ENCODE measurements at regions of chr1 and their contacts with region 1.

Region 1: DNA sequence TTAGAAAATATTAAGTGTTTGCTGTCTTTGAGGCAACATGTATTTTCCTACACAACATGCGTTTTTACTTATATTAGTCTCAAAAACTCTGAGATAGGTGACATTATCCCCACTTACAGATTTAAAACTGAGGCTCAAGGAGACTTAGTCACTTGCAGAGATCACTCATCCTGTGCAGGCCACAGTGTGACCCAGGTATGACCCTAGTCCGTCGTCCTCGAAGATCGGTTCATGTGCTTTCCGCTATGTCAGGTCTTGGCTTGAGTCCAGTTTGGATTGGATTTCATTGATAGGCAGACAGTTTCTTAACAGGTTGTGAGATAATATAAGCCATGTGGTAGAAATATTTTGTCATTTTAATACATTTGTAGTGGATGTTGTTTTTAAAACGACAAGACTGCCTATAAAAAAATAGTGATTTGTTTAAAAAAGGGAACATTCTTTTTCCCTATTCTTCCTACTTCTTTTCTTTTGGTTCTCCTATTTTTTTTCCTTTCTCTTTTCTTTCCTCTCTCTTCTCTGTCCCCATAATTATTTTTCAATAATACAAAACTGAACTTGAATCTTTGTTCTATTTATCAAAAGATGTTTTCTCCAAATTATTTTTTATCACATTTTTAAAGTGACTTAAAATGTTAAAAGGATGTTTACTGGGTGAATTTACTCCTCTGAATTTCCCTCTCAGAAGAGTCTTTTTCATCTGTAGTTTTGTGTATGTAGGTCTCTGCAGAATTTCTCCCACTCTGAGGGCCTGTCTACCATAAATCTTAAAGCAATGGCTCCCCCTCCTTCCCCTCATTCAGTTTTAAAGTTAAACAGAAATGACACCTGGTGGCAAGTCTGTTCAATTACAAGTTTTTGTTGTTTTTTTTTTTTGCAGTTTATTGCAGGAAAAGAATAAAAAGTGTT is 81.8 kb downstream of the PHTF1 start:
- DNase-seq: peak; percentile 80 to 94 (median 83)
- ATAC-seq: peak; percentile 96
- H3K4me3 ChIP-seq: no peak overlapping the region
- H3K27ac ChIP-seq: no peak overlapping the region
- H3K4me1 ChIP-seq: peaks cover 0 to 32% of the 10 kb centered on the region in 2 experiments; a peak in 4 of 5 replicates
- H3K27me3 ChIP-seq: no peaks in the 10 kb centered on the region
- CTCF ChIP-seq: peak; percentile 59 to 85 (median 64)
- EP300 ChIP-seq: peak; percentile 76
- POLR2A ChIP-seq: no peak
- RAD21 ChIP-seq: peak; percentile 85 to 86

Region 2: GRCh38 chr1:112809253-112809684 is 868.2 kb before region 1 on chr1:
- CTCF ChIA-PET with region 1: no interaction called
- POLR2A ChIA-PET with region 1: no interaction called
- in situ Hi-C with region 1: loop called (anchors 5 kb)
- intact Hi-C with region 1: loop called (anchors 5 kb)
- DNase-seq: peak; percentile 78 to 88 (median 82)
- ATAC-seq: peak; percentile 97
- H3K4me3 ChIP-seq: no peak overlapping the region
- H3K27ac ChIP-seq: no peak overlapping the region
- H3K4me1 ChIP-seq: peaks cover 2 to 6% of the 10 kb centered on the region in 2 experiments; a peak in 3 of 5 replicates
- H3K27me3 ChIP-seq: peaks cover 19 to 20% of the 10 kb centered on the region in 2 experiments; a peak in 4 of 5 replicates
- CTCF ChIP-seq: peak; percentile 89 to 98 (median 95)
- EP300 ChIP-seq: no peak
- POLR2A ChIP-seq: no peak
- RAD21 ChIP-seq: peak; percentile 94 to 98

Region 3: GRCh38 chr1:113140588-113141446 is 536.7 kb before region 1 on chr1:
- CTCF ChIA-PET with region 1: interaction called, 25 read pairs
- POLR2A ChIA-PET with region 1: interaction called, 3 read pairs
- in situ Hi-C with region 1: loop called (anchors 5 kb)
- intact Hi-C with region 1: loop called (anchors 1 kb)
- DNase-seq: peak; percentile 69 to 88 (median 78)
- ATAC-seq: peak; percentile 89
- H3K4me3 ChIP-seq: no peak overlapping the region
- H3K27ac ChIP-seq: peak overlapping the region; percentile 73
- H3K4me1 ChIP-seq: peaks cover 9 to 37% of the 10 kb centered on the region in 2 experiments
- H3K27me3 ChIP-seq: no peaks in the 10 kb centered on the region
- CTCF ChIP-seq: peak; percentile 86 to 97 (median 97)
- EP300 ChIP-seq: peak; percentile 6; the same call in 1 of the 2 replicates
- POLR2A ChIP-seq: no peak
- RAD21 ChIP-seq: peak; percentile 97

Region 4: DNA sequence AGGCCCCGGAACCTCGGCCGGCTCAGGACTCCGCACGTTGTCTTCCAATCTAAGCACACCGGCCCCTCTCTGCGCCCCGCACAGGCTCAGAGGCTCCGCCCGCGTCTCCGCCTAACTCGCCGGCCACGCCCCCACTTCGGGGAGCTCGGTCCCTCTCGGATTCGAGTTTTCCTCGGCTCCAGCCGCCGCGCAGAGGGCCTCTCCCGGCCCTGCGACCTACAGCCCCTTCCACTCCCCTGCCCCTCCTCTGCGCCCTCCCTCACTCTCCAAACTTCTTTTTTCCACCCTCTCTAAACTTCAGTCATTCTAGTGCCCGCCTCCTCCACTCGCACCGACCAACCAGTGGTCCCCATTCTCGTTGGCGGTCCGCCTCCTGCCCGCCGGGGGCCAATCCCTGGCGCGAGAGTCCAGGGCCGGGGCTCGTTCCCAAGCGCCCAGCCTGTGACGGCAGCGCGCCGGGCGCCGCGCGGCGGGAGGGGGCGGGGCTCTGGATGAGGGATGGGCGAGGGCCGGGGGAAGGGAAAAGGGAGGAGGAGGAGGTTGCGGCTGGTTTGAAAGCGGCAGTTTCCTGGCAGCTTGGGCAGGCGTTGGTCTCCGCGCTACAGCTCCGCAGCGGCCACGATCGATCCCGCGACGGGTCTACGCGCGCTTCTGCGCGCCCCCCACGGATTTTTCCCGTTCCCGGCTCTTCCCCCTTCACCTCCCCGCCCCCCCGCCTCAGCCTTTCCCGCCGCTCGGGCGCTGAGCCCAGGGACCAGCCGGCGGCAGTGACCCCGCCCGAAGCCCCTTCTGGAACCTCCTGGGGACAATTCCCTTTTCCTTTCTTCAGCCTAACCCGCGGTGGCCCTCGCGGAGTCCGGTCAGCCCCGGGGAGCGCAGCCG is 287.3 kb before region 1 on chr1 and contains the start of gene MAGI3:
- CTCF ChIA-PET with region 1: no interaction called
- POLR2A ChIA-PET with region 1: no interaction called
- in situ Hi-C with region 1: no loop called
- intact Hi-C with region 1: loop called (anchors 5 kb)
- DNase-seq: peak; percentile 97 to 98 (median 98)
- ATAC-seq: peak; percentile 99
- H3K4me3 ChIP-seq: peak within 1 kb of the TSS; percentile 55
- H3K27ac ChIP-seq: peak within 1 kb of the TSS; percentile 52
- H3K4me1 ChIP-seq: peaks cover 17 to 23% of the 10 kb centered on the region in 2 experiments; a peak in 4 of 5 replicates
- H3K27me3 ChIP-seq: peaks cover 6 to 13% of the 10 kb centered on the region in 2 experiments; a peak in 4 of 5 replicates
- CTCF ChIP-seq: 0 out of 6 replicates have a peak, but pooled peaks of 1 of the 3 experiments have one; percentile 4
- EP300 ChIP-seq: no peak
- POLR2A ChIP-seq: peak; percentile 64
- RAD21 ChIP-seq: peak in 1 of 2 experiments; percentile 7; a peak in 2 of 4 replicates
- polyA plus RNA-seq, gene MAGI3: 1.0 to 1.2 TPM

Region 5: DNA sequence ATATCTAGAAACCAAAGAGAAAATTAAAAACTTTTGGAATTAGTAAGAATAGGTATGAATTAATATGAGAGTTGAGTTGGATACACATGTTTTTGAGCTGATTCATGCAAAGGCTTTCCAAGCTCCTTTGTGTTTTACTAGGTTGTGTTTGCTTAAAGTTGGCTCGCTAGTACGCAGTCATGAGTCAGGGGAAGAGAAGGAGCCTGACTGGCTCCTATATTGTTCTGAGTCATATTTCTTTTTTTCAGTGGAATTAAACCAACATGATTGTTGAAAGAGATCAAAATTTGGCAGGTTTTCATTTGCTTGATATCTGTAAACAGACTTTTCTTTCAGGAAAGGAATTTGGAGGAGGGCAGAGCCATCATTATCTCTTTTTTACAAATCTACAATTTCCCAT is 220.5 kb before region 1 on chr1:
- CTCF ChIA-PET with region 1: no interaction called
- POLR2A ChIA-PET with region 1: no interaction called
- in situ Hi-C with region 1: no loop called
- intact Hi-C with region 1: no loop called
- DNase-seq: peak in 1 of 4 experiments; percentile 9
- ATAC-seq: no peak
- H3K4me3 ChIP-seq: no peak overlapping the region
- H3K27ac ChIP-seq: no peak overlapping the region
- H3K4me1 ChIP-seq: no peaks in the 10 kb centered on the region
- H3K27me3 ChIP-seq: no peaks in the 10 kb centered on the region; a peak in 1 of 5 replicates
- CTCF ChIP-seq: no peak
- EP300 ChIP-seq: no peak
- POLR2A ChIP-seq: no peak
- RAD21 ChIP-seq: no peak

Region 6: GRCh38 chr1:113811888-113812660 is 134.6 kb after region 1 on chr1 and contains the start of gene RSBN1:
- CTCF ChIA-PET with region 1: no interaction called
- POLR2A ChIA-PET with region 1: no interaction called
- in situ Hi-C with region 1: no loop called
- intact Hi-C with region 1: loop called (anchors 5 kb)
- DNase-seq: peak; percentile 90 to 100 (median 92)
- ATAC-seq: peak; percentile 94
- H3K4me3 ChIP-seq: peak within 1 kb of the TSS; percentile 92
- H3K27ac ChIP-seq: peak within 1 kb of the TSS; percentile 93
- H3K4me1 ChIP-seq: peaks cover 10% of the 10 kb centered on the region in 2 experiments; a peak in 4 of 5 replicates
- H3K27me3 ChIP-seq: no peaks in the 10 kb centered on the region
- CTCF ChIP-seq: peak in 2 of 3 experiments; percentile 7 to 29; a peak in 2 of 6 replicates
- EP300 ChIP-seq: peak; percentile 95
- POLR2A ChIP-seq: peak; percentile 94
- RAD21 ChIP-seq: no peak
- polyA plus RNA-seq, gene RSBN1: 4.5 to 13.0 TPM

Measured in K562 (cell line).